ENCODE measurements at regions of chr16 and their contacts with region 1.

Region 1: DNA sequence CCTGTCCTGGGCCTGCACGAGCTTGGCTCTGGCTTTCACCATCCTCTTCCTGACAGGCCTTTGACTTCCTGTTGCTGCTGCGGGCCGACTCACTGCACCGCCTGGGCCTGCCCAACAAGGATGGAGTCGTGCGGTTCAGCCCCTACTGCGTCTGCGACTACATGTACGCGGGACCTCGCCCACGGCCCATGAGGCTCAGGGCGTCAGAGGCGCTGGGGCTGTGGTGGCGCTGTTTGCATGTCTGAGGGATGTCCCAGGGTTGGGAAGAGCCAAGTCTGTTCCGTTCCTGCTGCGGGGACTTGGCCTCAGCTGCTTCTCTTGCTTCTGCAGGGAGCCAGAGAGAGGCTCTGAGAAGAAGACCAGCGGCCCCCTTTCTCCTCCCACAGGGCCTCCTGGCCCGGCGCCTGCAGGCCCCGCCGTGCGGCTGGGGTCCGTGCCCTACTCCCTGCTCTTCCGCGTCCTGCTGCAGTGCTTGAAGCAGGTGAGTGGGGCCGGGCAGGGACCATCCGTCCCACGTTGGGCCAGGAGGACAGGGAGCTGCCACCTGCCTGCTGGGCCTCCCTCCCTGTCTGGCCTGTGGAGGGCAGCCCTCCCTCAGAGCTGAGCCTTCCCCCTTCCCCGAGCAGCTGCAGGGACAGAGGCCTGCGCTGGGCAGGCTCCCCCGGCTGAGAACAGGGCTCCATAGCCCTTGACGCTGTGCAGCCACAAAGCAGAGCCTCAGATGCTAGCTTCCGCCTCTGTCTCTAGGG is 23.8 kb downstream of the TSC2 start:
- DNase-seq: no peak
- H3K4me3 ChIP-seq: no peak overlapping the region
- H3K27ac ChIP-seq: no peak overlapping the region
- H3K4me1 ChIP-seq: no peaks in the 10 kb centered on the region
- H3K27me3 ChIP-seq: no peaks in the 10 kb centered on the region
- CTCF ChIP-seq: no peak

Region 2: GRCh38 chr16:1983544-1984346 is 87.9 kb before region 1 on chr16 and contains the start of gene GFER:
- CTCF ChIA-PET with region 1: no interaction called
- dilution Hi-C with region 1: loop called (anchors 10 kb)
- in situ Hi-C with region 1: no loop called
- intact Hi-C with region 1: no loop called
- DNase-seq: peak; percentile 82
- H3K4me3 ChIP-seq: peak within 1 kb of the TSS; percentile 56 to 76 (median 69)
- H3K27ac ChIP-seq: no peak within 1 kb of the TSS
- H3K4me1 ChIP-seq: peaks cover 42% of the 10 kb centered on the region
- H3K27me3 ChIP-seq: no peaks in the 10 kb centered on the region
- CTCF ChIP-seq: peak in 1 of 2 donors; percentile 25
- total RNA-seq, gene GFER: 6.5 to 30.7 TPM

Region 3: DNA sequence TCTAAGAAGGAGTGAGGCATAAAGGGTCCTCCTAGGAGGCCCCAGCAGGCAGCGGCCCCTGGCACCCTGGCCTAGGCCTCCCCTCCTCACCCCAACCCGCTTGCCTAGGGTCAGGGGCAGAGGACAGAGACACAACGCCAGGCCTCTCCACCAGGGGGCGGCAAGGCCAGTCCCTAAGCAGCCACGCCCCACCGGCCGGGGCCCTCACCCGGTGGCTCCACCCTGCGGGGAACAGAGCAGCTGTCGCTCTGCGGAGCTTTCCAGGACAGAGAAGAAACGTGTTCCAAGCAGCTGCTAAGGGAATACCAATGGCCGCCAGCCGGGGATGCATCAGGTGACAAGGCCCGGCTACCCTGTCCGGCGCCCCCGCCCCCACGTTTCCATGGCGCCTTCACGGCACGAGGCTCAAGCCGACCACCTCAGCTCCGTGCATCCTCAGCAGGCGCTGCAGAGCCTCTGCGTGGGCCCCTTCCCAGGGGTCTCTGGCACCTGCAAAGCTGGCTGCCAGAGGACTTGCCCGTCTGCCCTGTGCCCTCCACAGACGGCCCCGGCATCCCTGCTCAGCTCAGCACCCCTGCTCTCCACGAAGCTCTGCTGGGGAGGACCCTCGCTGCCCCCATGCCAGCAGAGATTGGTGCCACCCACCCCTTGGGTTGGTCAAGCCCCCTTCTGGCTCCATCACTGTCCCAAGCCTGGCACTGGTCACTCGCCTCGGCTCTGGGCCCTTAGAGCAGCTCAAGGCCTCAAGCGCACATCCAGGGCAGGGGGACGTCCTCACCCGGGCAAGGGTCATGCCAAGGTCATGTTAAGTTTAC is 67.6 kb before region 1 on chr16:
- CTCF ChIA-PET with region 1: interaction called, 7 read pairs
- dilution Hi-C with region 1: loop called (anchors 5 kb)
- in situ Hi-C with region 1: no loop called
- intact Hi-C with region 1: no loop called
- DNase-seq: peak; percentile 66
- H3K4me3 ChIP-seq: no peak overlapping the region
- H3K27ac ChIP-seq: no peak overlapping the region
- H3K4me1 ChIP-seq: peaks cover 38% of the 10 kb centered on the region
- H3K27me3 ChIP-seq: no peaks in the 10 kb centered on the region
- CTCF ChIP-seq: peak; percentile 73 to 88

Region 4: DNA sequence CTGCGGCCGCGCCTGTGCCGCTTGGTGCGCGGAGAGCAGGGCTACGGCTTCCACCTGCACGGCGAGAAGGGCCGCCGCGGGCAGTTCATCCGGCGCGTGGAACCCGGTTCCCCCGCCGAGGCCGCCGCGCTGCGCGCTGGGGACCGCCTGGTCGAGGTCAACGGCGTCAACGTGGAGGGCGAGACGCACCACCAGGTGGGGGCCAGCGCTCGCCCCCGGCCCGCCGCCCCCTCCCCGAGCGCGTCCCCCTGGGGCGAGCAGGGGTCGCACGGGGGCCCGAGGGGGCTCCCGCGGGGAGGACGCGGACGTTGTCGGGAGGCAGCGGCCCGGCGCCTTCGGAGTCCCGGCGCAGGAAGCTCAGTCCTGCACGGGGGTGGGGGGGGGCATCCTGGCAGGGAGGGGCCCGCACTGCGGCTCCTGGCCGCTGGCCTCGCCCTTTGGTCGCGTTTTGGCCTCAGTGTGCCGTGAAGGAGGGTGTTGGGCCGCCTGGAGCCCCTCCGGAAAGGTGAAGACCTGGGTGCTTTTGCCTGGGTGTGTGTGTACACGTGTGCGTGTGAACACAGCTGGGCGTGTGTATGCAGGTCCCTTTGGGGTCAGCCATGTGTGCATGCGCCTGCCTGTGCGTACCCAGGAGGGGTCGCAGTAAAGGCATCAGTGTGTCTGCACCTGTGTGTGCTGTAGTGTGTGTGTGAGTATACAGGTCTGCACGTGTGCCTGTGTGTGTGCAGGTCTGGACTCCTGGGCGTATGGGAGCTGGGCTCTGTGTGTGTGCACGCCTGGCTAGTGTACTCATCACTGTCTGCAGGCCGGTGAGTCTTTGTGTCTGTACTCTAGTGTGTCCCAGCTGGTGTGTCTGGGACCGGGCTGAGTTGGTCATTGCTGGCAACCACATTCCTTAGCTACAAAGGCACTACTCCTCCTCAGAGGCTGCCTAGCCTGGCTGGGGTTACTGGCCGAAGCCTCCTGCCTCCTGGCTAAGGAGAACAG is 44.3 kb before region 1 on chr16:
- CTCF ChIA-PET with region 1: no interaction called
- dilution Hi-C with region 1: no loop called
- in situ Hi-C with region 1: no loop called
- intact Hi-C with region 1: no loop called
- DNase-seq: no peak
- H3K4me3 ChIP-seq: peak overlapping the region; percentile 5 to 47 (median 41)
- H3K27ac ChIP-seq: no peak overlapping the region
- H3K4me1 ChIP-seq: peaks cover 16% of the 10 kb centered on the region
- H3K27me3 ChIP-seq: no peaks in the 10 kb centered on the region
- CTCF ChIP-seq: no peak

Region 5: GRCh38 chr16:2056681-2057407 is 14.8 kb before region 1 on chr16:
- CTCF ChIA-PET with region 1: no interaction called
- dilution Hi-C with region 1: no loop called
- in situ Hi-C with region 1: no loop called
- intact Hi-C with region 1: no loop called
- DNase-seq: no peak
- H3K4me3 ChIP-seq: no peak overlapping the region
- H3K27ac ChIP-seq: no peak overlapping the region
- H3K4me1 ChIP-seq: no peaks in the 10 kb centered on the region
- H3K27me3 ChIP-seq: no peaks in the 10 kb centered on the region
- CTCF ChIP-seq: peak; percentile 25 to 34

Measured in mammary epithelial cell (primary cell).